ENCODE measurements at regions of chr10 and their contacts with region 1.

Region 1: GRCh38 chr10:108877095-108877561 is 1046.2 kb downstream of the XPNPEP1 start:
- DNase-seq: no peak
- ATAC-seq: no peak
- H3K4me3 Mint-ChIP-seq: no peak overlapping the region
- H3K27ac Mint-ChIP-seq: no peak overlapping the region
- H3K4me1 Mint-ChIP-seq: no peaks in the 10 kb centered on the region
- H3K27me3 Mint-ChIP-seq: no peaks in the 10 kb centered on the region
- CTCF ChIP-seq: no peak

Region 2: GRCh38 chr10:108913300-108913699 is 36.2 kb after region 1 on chr10:
- CTCF ChIA-PET with region 1: no interaction called
- POLR2A ChIA-PET with region 1: interaction called, 12 read pairs
- intact Hi-C with region 1: no loop called
- DNase-seq: no peak
- ATAC-seq: no peak
- H3K4me3 Mint-ChIP-seq: no peak overlapping the region
- H3K27ac Mint-ChIP-seq: no peak overlapping the region
- H3K4me1 Mint-ChIP-seq: peaks cover 3% of the 10 kb centered on the region
- H3K27me3 Mint-ChIP-seq: peaks cover 22% of the 10 kb centered on the region
- CTCF ChIP-seq: no peak